Psoas muscle (tissue), 8 donors: ENCODE measurements at regions of chr2 and their contacts with region 1.

Region 1: GRCh38 chr2:1742681-1743395 is 1.5 kb downstream of the PXDN start:
- DNase-seq: peak; percentile 77 to 86
- ATAC-seq: peak; percentile 30 to 65 (median 41)
- H3K4me3 ChIP-seq: peak overlapping the region; percentile 69
- H3K27ac ChIP-seq: peak overlapping the region; percentile 71
- H3K4me1 ChIP-seq: peaks cover 12% of the 10 kb centered on the region
- H3K27me3 ChIP-seq: peaks cover 0 to 61% (median 6%) of the 10 kb centered on the region in 3 donors
- CTCF ChIP-seq: peak; percentile 32

Region 2: DNA sequence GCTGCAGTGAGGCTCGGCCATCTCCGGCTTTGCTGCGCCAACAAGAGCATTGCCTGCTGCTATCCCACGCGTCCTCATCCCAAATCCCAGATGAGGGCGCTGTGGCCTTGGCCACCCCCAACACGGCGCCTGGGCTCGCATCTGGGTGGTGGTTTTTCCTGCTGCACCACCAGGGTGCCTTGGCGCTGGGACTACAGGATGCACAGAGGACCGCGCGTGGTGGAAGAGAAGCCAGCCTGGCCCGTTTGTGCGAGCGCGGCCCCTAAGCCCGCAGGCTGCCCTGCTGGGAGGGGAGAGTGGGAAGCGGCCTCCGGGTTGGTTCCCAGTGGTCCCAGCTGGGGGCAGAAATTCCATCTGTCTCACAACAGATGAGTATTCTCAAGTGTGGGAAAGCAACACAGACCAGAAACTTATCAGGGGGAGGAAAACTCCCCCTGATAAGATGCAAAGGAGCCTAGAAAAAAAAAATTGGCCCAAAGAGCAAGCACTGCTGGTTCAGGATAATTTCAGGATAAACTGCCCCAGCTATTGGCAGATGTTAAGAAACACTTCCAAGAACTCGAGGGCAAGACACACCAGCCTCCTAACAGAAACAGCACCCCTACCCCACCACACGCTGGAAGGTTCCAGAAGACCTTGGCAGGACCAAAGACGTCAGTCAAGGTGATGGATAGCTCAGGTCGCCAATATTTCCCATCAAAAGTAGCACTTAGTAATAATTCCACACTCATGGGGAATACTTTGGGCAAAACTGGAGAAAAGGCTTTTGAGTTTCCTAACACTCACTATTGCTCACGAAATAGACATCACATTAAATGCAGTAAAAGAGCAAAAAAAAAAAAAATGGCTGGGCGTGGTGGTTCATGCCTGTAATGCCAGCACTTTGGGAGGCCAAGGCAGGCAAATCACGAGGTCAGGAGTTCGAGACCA is 150.6 kb before region 1 on chr2:
- intact Hi-C with region 1: loop called in 1 of 2 experiments (anchors 5 kb)
- DNase-seq: peak; percentile 72 to 79
- ATAC-seq: peak; percentile 47 to 82 (median 78)
- H3K4me3 ChIP-seq: no peak overlapping the region
- H3K27ac ChIP-seq: no peak overlapping the region
- H3K4me1 ChIP-seq: no peaks in the 10 kb centered on the region
- H3K27me3 ChIP-seq: peaks cover 0 to 26% (median 0%) of the 10 kb centered on the region in 3 donors
- CTCF ChIP-seq: peak; percentile 42

Region 3: DNA sequence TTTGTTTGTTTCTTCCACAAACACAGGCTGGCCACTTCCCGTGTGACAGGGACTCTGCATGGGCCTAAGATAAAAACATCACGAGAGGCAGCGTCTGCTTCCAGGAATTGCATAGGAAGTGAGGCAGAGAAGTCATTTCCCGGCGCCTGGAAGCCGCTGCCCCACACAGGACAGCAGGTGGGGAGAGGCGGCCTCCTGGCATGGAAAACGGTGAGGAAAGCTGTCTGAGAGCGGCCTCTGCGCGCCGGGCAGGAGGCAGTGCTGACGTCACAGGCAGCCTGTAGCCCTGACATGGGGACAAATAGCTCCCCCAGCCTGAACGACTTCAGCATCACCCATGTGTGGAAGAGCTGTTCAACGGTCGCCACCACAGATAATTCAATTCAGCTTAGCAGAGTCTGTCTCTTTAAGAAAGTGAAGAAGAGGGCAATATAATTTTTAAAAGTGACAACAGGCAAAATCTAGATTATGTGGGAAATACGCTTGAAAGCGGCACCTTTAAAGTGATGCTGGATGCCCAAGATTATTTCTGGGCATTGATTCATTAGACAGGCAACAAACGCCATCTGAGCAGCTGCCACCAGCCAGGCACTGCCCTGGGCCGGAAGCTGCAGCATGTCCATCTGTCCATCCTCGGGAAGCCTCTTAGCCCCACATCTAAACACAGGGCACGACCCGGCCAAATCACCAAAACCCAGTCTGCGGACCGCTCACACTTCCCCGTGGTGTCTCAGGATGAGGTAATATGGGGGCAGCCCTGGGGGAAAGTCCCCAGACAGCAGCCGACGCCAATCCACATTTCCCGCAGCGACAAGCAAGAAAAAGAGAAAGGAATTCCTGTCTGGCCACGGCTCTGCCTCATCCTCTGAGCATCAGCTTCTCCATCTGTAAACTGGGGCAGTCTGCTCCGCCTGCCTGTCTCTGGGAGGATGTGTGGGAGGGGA is 137.5 kb before region 1 on chr2:
- intact Hi-C with region 1: loop called in 1 of 2 experiments (anchors 5 kb)
- DNase-seq: peak; percentile 67 to 79
- ATAC-seq: peak; percentile 42 to 67 (median 63)
- H3K4me3 ChIP-seq: no peak overlapping the region
- H3K27ac ChIP-seq: peak overlapping the region; percentile 36
- H3K4me1 ChIP-seq: peaks cover 5% of the 10 kb centered on the region
- H3K27me3 ChIP-seq: peaks cover 0 to 49% (median 7%) of the 10 kb centered on the region in 3 donors
- CTCF ChIP-seq: no peak

Region 4: GRCh38 chr2:1730015-1730927 is 12.6 kb before region 1 on chr2:
- intact Hi-C with region 1: no loop called
- DNase-seq: peak in 1 of 2 donors; percentile 25
- ATAC-seq: peak in 2 of 4 donors; percentile 22 to 50
- H3K4me3 ChIP-seq: no peak overlapping the region
- H3K27ac ChIP-seq: peak overlapping the region; percentile 65
- H3K4me1 ChIP-seq: peaks cover 4% of the 10 kb centered on the region
- H3K27me3 ChIP-seq: peaks cover 0 to 16% (median 5%) of the 10 kb centered on the region in 3 donors
- CTCF ChIP-seq: no peak

Region 5: GRCh38 chr2:1781271-1782080 is 38.6 kb after region 1 on chr2:
- intact Hi-C with region 1: no loop called
- DNase-seq: no peak
- ATAC-seq: no peak
- H3K4me3 ChIP-seq: no peak overlapping the region
- H3K27ac ChIP-seq: no peak overlapping the region
- H3K4me1 ChIP-seq: no peaks in the 10 kb centered on the region
- H3K27me3 ChIP-seq: peaks cover 0 to 2% (median 0%) of the 10 kb centered on the region in 3 donors
- CTCF ChIP-seq: no peak